H1 (cell line): ENCODE measurements at regions of chr1 and their contacts with region 1.

Region 1: GRCh38 chr1:110619412-110620249 is 13.5 kb upstream of the KCNA2 start:
- DNase-seq: peak; percentile 53 to 94
- H3K4me3 ChIP-seq: peak overlapping the region; percentile 13 to 56 (median 48); a peak in 7 of 8 replicates
- H3K27ac ChIP-seq: no peak overlapping the region
- H3K4me1 ChIP-seq: peaks cover 0 to 2% (median 0%) of the 10 kb centered on the region in 4 experiments; a peak in 4 of 7 replicates
- H3K27me3 ChIP-seq: peaks cover 0 to 18% (median 10%) of the 10 kb centered on the region in 4 experiments; a peak in 4 of 7 replicates
- CTCF ChIP-seq: peak; percentile 94 to 99 (median 97)
- EP300 ChIP-seq: no peak
- POLR2A ChIP-seq: no peak
- RAD21 ChIP-seq: peak; percentile 79 to 84

Region 2: DNA sequence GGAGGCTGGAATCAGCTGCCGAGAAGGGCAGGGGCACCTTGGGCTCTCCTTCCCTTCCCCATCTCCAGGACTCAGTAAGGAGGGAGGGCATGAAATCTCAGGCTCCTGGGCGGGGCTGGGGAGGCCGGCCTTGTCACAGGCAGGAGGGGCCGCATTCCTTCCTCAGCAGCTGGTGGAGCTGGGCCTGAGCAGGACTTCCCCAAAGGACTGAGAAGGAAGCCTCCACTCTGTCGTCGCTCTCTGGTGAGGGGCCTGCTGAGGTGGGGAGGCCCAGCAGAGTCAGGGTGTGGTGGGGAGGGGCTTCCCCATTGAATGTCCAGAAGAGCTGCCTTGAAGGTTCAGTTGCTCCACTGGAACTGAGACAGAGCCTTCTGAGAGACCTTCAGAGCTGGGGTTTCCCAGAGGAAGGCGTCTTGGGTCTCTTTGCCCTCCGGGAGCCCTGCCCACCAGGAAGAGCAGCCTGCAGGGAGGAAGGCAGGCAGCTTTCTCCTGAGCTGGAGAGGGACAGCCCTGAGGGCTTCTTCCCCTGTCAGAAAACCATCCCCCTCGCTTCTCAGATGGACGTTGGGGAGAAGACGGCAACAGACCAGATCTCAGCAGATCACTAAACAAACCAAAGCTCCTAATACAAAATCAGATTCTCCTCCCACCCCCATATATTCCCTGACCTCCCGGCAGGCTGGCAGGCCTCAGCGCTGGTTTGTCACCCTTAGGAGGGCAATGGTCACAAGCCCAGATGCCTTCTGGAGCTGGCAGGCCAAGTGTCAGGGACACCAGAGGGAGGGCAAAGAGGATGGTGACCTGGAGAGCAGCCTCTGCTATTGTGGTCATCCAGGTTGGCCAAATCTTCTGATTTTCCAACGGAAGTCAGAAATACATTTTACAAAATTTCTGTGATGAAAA is 111.3 kb before region 1 on chr1:
- CTCF ChIA-PET with region 1: interaction called, 10 read pairs
- POLR2A ChIA-PET with region 1: no interaction called
- DNase-seq: peak in 1 of 2 experiments; percentile 58
- H3K4me3 ChIP-seq: no peak overlapping the region
- H3K27ac ChIP-seq: no peak overlapping the region
- H3K4me1 ChIP-seq: peaks cover 0 to 7% (median 2%) of the 10 kb centered on the region in 4 experiments; a peak in 3 of 7 replicates
- H3K27me3 ChIP-seq: no peaks in the 10 kb centered on the region; a peak in 1 of 7 replicates
- CTCF ChIP-seq: no peak
- EP300 ChIP-seq: no peak
- POLR2A ChIP-seq: no peak
- RAD21 ChIP-seq: no peak

Region 3: GRCh38 chr1:110542725-110543124 is 76.9 kb before region 1 on chr1:
- CTCF ChIA-PET with region 1: interaction called, 11 read pairs
- POLR2A ChIA-PET with region 1: no interaction called
- DNase-seq: no peak
- H3K4me3 ChIP-seq: no peak overlapping the region
- H3K27ac ChIP-seq: no peak overlapping the region
- H3K4me1 ChIP-seq: no peaks in the 10 kb centered on the region
- H3K27me3 ChIP-seq: peaks cover 0 to 2% (median under 1%) of the 10 kb centered on the region in 4 experiments; a peak in 1 of 7 replicates
- CTCF ChIP-seq: no peak
- EP300 ChIP-seq: no peak
- POLR2A ChIP-seq: no peak
- RAD21 ChIP-seq: no peak

Region 4: DNA sequence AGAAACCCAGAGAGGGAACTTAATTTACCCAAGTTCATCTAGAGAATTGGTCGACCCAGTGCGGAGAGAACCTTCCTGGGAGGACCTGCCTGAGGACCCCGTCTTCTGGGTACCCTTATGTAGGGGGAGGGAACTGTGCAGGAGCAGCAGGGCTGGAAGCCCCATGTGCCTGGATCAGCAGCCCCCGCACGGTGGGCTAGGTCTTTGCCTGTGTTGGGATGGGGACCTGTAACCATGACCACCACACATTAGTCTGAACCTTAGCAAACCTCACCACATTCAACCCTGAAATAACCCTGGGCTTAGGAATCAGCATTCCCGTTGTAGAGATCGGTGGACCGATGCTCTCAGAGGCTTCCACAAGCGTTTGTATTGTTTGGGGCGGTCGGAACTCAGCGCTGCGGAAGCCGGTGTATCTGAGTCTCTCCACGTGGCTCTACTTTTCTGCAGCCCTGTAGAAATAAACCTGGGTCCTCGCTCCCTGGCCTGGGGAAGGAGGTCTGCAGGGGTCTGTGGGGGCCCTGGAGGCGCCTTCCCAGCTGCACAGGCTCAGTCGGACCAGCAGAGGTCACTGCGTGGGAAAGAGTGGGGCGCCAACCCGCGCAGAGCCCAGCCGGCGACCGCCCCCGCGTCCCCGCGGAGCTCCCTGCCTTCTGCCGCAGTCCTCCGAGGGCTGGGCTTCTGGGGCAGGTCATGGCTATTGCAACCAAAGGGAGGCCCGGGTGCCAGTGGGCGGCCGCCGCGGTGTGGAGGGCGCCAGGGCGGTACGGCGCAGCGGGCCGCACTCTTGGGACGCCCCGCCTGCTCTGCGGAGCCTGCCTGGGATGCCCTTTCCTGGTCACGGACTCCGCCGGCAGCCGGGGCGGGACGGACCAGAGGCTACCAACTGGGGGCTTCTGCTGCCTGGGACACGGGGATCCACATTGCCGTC is 64.5 kb before region 1 on chr1:
- CTCF ChIA-PET with region 1: interaction called, 16 read pairs
- POLR2A ChIA-PET with region 1: no interaction called
- DNase-seq: peak in 1 of 2 experiments; percentile 81
- H3K4me3 ChIP-seq: peak overlapping the region; percentile 37 to 57 (median 44)
- H3K27ac ChIP-seq: no peak overlapping the region
- H3K4me1 ChIP-seq: peaks cover 0 to 8% (median under 1%) of the 10 kb centered on the region in 4 experiments; a peak in 3 of 7 replicates
- H3K27me3 ChIP-seq: peaks cover 3 to 32% (median 24%) of the 10 kb centered on the region in 4 experiments
- CTCF ChIP-seq: peak; percentile 73 to 81 (median 76)
- EP300 ChIP-seq: no peak
- POLR2A ChIP-seq: no peak
- RAD21 ChIP-seq: peak; percentile 32 to 52

Region 5: GRCh38 chr1:110630839-110631663 is 11.4 kb after region 1 on chr1:
- CTCF ChIA-PET with region 1: interaction called, 14 read pairs
- POLR2A ChIA-PET with region 1: no interaction called
- DNase-seq: peak; percentile 54 to 89
- H3K4me3 ChIP-seq: no peak overlapping the region
- H3K27ac ChIP-seq: no peak overlapping the region
- H3K4me1 ChIP-seq: no peaks in the 10 kb centered on the region
- H3K27me3 ChIP-seq: peaks cover 0 to 11% (median 0%) of the 10 kb centered on the region in 4 experiments; a peak in 2 of 7 replicates
- CTCF ChIP-seq: peak; percentile 85 to 93 (median 88)
- EP300 ChIP-seq: no peak
- POLR2A ChIP-seq: no peak
- RAD21 ChIP-seq: peak; percentile 83 to 86

Region 6: GRCh38 chr1:110766025-110766647 is 146.5 kb after region 1 on chr1:
- CTCF ChIA-PET with region 1: interaction called, 38 read pairs
- POLR2A ChIA-PET with region 1: no interaction called
- DNase-seq: no peak
- H3K4me3 ChIP-seq: no peak overlapping the region
- H3K27ac ChIP-seq: no peak overlapping the region
- H3K4me1 ChIP-seq: no peaks in the 10 kb centered on the region
- H3K27me3 ChIP-seq: no peaks in the 10 kb centered on the region
- CTCF ChIP-seq: peak in 2 of 3 experiments; percentile 73 to 87; a peak in 3 of 4 replicates
- EP300 ChIP-seq: no peak
- POLR2A ChIP-seq: no peak
- RAD21 ChIP-seq: peak; percentile 84 to 89